ENCODE measurements at regions of chr14 and their contacts with region 1.

Region 1: GRCh38 chr14:89416002-89416995 is 734 bp downstream of the FOXN3 start:
- DNase-seq: peak; percentile 99
- H3K4me3 ChIP-seq: peak overlapping the region; percentile 77 to 99 (median 94)
- H3K27ac ChIP-seq: peak overlapping the region; percentile 96 to 99 (median 98)
- H3K4me1 ChIP-seq: peaks cover 0 to 37% (median 20%) of the 10 kb centered on the region in 4 donors
- H3K27me3 ChIP-seq: no peaks in the 10 kb centered on the region
- CTCF ChIP-seq: no peak
- EP300 ChIP-seq: peak in 1 of 4 donors; percentile 52
- POLR2A ChIP-seq: peak; percentile 14 to 21

Region 2: GRCh38 chr14:88323523-88324199 is 1092.6 kb before region 1 on chr14:
- intact Hi-C with region 1: no loop called
- DNase-seq: no peak
- H3K4me3 ChIP-seq: peak overlapping the region in 3 of 4 donors; percentile 17 to 35 (median 34)
- H3K27ac ChIP-seq: no peak overlapping the region
- H3K4me1 ChIP-seq: peaks cover 0 to 23% (median 8%) of the 10 kb centered on the region in 4 donors
- H3K27me3 ChIP-seq: peaks cover 14 to 77% (median 46%) of the 10 kb centered on the region in 3 donors
- CTCF ChIP-seq: no peak
- EP300 ChIP-seq: no peak
- POLR2A ChIP-seq: no peak

Region 3: DNA sequence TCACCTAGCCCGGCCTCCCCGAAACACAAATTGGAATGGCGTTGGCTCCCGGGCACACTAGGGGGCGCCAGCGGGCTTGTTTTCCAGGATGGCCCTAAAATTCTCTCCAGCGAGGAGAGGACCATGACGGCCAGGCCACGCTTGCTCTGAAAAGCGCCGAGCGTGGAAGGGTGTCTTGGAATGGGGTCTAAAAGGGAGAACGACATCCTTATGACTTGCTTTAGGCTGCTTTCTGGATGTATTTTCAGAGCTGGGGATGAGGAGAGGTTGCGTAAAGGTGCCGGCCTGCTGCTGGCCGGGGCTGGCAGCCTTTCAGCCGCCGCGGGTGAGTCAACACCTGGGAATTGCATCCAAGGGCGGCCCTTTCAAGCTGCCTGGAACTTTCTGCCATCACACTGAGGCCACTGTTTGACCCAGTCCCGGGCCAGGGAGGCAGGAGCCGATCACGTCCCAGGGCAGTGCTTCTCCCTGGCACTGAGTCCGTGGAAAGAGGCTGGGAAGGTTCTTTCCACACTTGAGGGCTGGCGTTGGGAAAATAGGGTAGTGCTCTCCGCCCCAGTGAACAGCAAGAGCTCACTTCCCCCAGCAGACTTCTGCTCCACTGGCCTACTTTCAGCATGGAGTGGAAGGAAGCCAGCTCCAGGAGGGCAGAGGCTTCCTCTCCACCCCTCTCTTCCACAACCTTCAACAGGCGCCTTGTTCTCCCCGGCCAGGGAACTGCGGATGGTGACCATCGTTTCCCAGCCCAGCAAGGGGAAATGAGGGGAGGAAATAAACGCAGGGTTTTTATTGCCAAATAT is 375.6 kb before region 1 on chr14:
- intact Hi-C with region 1: loop called (anchors 2 kb)
- DNase-seq: peak; percentile 95
- H3K4me3 ChIP-seq: peak overlapping the region; percentile 3 to 48 (median 39)
- H3K27ac ChIP-seq: peak overlapping the region; percentile 79 to 93 (median 86)
- H3K4me1 ChIP-seq: peaks cover 0 to 10% (median 8%) of the 10 kb centered on the region in 4 donors
- H3K27me3 ChIP-seq: no peaks in the 10 kb centered on the region
- CTCF ChIP-seq: peak; percentile 90 to 94 (median 94)
- EP300 ChIP-seq: peak in 2 of 4 donors; percentile 9 to 28
- POLR2A ChIP-seq: no peak

Region 4: GRCh38 chr14:89303457-89304435 is 112.6 kb before region 1 on chr14:
- intact Hi-C with region 1: loop called (anchors 1 kb)
- DNase-seq: peak; percentile 91
- H3K4me3 ChIP-seq: peak overlapping the region; percentile 1 to 28 (median 20)
- H3K27ac ChIP-seq: peak overlapping the region; percentile 87 to 95 (median 90)
- H3K4me1 ChIP-seq: peaks cover 0 to 53% (median 45%) of the 10 kb centered on the region in 4 donors
- H3K27me3 ChIP-seq: no peaks in the 10 kb centered on the region
- CTCF ChIP-seq: no peak
- EP300 ChIP-seq: peak; percentile 81 to 98 (median 86)
- POLR2A ChIP-seq: no peak

Region 5: GRCh38 chr14:89365061-89365801 is 51.1 kb before region 1 on chr14:
- intact Hi-C with region 1: no loop called
- DNase-seq: no peak
- H3K4me3 ChIP-seq: no peak overlapping the region
- H3K27ac ChIP-seq: peak overlapping the region in 2 of 4 donors; percentile 17 to 36
- H3K4me1 ChIP-seq: peaks cover 0 to 63% (median 48%) of the 10 kb centered on the region in 4 donors
- H3K27me3 ChIP-seq: no peaks in the 10 kb centered on the region
- CTCF ChIP-seq: no peak
- EP300 ChIP-seq: no peak
- POLR2A ChIP-seq: no peak

Region 6: DNA sequence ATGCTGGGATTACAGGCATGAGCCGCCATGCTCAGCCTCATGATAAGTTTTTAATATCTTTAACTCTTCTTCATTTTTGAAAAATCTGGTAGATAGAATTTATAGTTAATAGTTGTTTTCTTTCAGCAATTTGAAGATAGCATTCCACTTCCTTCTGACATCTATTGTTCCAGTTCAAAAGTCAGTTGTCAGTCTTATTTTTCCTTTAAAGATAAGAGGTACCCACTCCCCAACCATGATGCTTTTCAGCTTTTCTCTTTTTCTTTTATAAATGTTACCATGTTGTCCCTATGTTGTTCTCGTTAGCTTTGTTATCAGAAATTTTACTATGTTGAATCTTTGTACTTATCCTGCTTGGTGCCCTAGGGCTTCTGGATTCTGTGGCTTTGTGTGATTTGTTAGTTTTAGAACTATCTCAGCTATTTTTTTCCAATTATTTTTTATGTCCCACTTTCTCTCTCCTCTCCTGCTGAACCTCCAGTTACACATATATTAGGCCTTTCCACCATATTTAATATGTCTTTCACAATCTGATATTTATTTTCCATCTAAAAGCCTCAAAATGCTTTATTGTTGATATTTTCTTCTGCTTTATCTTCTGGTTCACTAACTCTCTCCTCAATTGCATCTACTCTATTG is 182.4 kb after region 1 on chr14:
- intact Hi-C with region 1: no loop called
- DNase-seq: no peak
- H3K4me3 ChIP-seq: no peak overlapping the region
- H3K27ac ChIP-seq: no peak overlapping the region
- H3K4me1 ChIP-seq: no peaks in the 10 kb centered on the region
- H3K27me3 ChIP-seq: no peaks in the 10 kb centered on the region
- CTCF ChIP-seq: no peak
- EP300 ChIP-seq: no peak
- POLR2A ChIP-seq: no peak

Region 7: GRCh38 chr14:89618811-89619551 is 202.7 kb after region 1 on chr14:
- intact Hi-C with region 1: loop called (anchors 5 kb)
- DNase-seq: peak; percentile 76
- H3K4me3 ChIP-seq: peak overlapping the region; percentile 55 to 85 (median 68)
- H3K27ac ChIP-seq: peak overlapping the region; percentile 70 to 84 (median 76)
- H3K4me1 ChIP-seq: peaks cover 0 to 28% (median 13%) of the 10 kb centered on the region in 4 donors
- H3K27me3 ChIP-seq: no peaks in the 10 kb centered on the region
- CTCF ChIP-seq: no peak
- EP300 ChIP-seq: no peak
- POLR2A ChIP-seq: no peak

Region 8: DNA sequence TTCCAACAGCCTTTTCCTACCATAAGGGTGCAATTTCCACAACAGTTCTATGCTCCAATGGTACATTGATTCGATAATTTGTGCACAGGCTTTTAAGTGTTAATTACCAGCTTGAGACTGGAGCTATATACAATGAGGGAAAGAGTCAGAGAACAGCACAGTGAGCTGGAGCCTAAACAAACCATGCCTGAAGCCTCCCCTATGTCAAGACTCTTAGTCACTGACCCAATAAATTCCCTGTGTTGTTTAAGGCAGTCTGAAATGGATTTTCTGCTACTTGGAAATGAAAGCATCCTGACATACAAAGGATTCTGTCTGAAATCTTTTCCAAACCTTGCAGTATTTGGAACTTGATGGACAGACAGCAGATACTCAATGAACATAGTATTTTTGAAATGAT is 389.2 kb after region 1 on chr14:
- intact Hi-C with region 1: no loop called
- DNase-seq: no peak
- H3K4me3 ChIP-seq: no peak overlapping the region
- H3K27ac ChIP-seq: peak overlapping the region in 1 of 4 donors; percentile 1
- H3K4me1 ChIP-seq: peaks cover 0 to 14% (median 7%) of the 10 kb centered on the region in 4 donors
- H3K27me3 ChIP-seq: no peaks in the 10 kb centered on the region
- CTCF ChIP-seq: no peak
- EP300 ChIP-seq: no peak
- POLR2A ChIP-seq: no peak

Region 9: DNA sequence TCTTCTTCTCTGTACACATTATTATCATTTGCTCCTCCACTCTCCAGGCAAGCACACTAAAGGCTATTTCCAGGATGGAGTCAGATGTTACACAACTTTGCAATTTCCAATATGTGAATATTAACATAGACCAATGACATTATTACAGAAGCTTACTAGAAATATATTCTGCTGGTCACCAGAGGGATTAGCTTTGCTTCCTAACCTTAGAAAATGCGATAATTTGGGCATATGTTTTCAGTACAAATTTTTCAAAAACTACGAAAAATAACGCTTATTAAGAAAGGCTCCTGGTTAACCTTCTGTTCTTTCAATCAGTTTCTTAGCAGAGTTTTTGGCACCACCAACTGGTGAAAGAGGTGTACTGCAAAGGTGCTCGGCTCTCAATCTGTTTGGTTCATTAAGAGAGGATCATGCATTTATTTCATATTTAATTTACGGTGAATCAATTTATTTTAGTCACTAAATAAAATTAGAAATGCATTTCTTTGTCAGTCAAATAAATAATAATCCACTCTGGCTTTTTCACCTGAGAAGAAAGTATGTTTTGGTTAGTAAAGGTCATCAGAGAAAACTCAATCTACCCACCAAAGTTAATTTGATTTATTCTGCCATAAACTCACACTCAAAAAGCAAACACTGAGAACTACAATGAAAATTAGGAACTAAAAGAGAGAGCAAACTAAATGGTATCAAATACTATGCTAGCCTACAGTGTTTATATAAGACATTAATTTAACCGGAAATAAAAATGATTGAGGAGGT is 499.0 kb after region 1 on chr14:
- intact Hi-C with region 1: loop called (anchors 2 kb)
- DNase-seq: peak; percentile 72
- H3K4me3 ChIP-seq: no peak overlapping the region
- H3K27ac ChIP-seq: peak overlapping the region in 1 of 4 donors; percentile 22
- H3K4me1 ChIP-seq: peaks cover 0 to 39% (median 33%) of the 10 kb centered on the region in 4 donors
- H3K27me3 ChIP-seq: no peaks in the 10 kb centered on the region
- CTCF ChIP-seq: peak; percentile 79 to 93 (median 89)
- EP300 ChIP-seq: no peak
- POLR2A ChIP-seq: no peak